ENCODE measurements at regions of chr14 and their contacts with region 1.

Region 1: DNA sequence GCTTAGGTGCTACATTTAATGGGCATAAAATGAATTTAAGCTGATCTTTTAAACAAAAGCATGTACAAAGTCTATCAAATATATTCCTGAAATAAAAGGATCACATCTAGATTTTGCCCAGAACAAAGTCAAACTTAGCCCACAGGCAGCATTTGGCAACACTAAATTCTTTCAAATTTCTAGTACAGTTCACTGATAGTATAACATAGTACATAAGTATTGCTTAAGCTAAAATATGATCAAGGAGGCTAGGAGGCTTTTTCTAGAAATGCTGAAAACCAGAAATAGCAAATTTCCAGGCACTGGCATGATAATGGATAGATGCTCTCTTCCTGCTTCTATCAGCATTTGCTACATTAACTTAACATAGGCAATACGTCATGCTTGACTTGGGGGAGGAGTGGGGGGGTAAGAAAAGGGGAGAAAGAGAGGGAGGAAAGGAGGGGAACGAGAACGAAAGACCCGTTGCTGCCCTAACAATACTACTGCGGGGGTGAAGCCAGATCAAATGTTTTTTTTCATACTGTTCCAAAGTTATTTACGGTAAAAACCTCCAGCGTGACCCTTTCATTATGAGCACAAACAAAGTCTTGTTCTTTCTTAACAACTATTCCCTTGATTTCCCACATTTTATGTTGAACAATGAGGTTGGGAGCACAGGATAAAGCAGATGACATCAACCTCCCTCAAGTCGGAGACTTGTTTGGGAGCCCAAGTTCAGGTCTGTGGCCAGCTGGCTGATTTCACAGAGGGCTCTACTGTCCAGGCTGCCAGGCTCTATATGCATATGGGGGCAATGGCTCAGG is 10.6 kb downstream of the TMED10 start:
- DNase-seq: peak in 4 of 6 donors; percentile 31 to 54 (median 40)
- ATAC-seq: peak; percentile 68 to 86 (median 80)
- H3K4me3 ChIP-seq: no peak overlapping the region
- H3K27ac ChIP-seq: peak overlapping the region in 3 of 4 donors; percentile 25 to 64 (median 35)
- H3K4me1 ChIP-seq: peaks cover 25 to 60% (median 42%) of the 10 kb centered on the region in 3 donors
- H3K27me3 ChIP-seq: no peaks in the 10 kb centered on the region
- CTCF ChIP-seq: no peak

Region 2: GRCh38 chr14:74988131-74988530 is 177.7 kb before region 1 on chr14:
- intact Hi-C with region 1: no loop called
- DNase-seq: no peak
- ATAC-seq: no peak
- H3K4me3 ChIP-seq: no peak overlapping the region
- H3K27ac ChIP-seq: no peak overlapping the region
- H3K4me1 ChIP-seq: no peaks in the 10 kb centered on the region
- H3K27me3 ChIP-seq: no peaks in the 10 kb centered on the region
- CTCF ChIP-seq: no peak

Region 3: GRCh38 chr14:75283162-75283881 is 117.5 kb after region 1 on chr14:
- intact Hi-C with region 1: loop called in 1 of 3 experiments (anchors 10 kb)
- DNase-seq: peak in 3 of 6 donors; percentile 47 to 62 (median 55)
- ATAC-seq: peak; percentile 1 to 27 (median 6)
- H3K4me3 ChIP-seq: no peak overlapping the region
- H3K27ac ChIP-seq: peak overlapping the region; percentile 39 to 73 (median 60)
- H3K4me1 ChIP-seq: peaks cover 10 to 28% (median 13%) of the 10 kb centered on the region in 3 donors
- H3K27me3 ChIP-seq: no peaks in the 10 kb centered on the region
- CTCF ChIP-seq: no peak